Activated CD4-positive, alpha-beta memory T cell treated with anti-CD3 and anti-CD28 coated beads for 36 hours (primary cell): ENCODE measurements at regions of chr9 and their contacts with region 1.

Region 1: DNA sequence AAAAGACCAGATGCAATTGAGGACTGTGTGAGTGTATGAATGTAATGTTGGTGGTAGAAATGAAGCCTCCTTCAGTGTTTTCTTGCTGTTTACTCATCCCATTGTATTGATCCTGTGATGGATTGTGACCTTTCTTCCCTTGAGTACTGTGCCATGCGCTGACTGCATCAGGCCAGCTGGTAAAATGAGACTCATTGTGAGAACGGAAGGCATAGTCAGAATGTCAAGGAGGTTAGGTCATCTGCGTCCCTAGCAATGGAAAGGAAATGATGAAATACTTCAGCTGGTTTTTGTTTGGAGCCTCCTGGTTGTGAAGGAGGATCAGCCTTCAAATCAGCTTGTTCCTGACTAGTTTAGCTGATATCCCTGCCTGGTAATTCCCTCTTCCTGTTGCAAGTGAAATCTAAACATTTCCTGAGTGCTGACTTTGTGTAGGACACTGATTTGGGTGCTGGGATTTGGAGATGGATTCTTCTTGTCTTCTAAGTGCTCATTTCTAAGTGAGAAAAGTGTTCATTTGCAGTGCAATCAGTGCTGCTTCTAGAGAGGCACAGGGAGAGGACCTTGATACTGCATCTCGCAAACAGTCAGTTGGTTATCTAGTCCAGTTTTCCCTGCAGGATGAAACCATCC is 35.5 kb downstream of the TNFSF8 start:
- DNase-seq: peak; percentile 76
- H3K4me3 Mint-ChIP-seq: no peak overlapping the region
- H3K27ac Mint-ChIP-seq: peak overlapping the region; percentile 77
- H3K4me1 Mint-ChIP-seq: peaks cover 52% of the 10 kb centered on the region
- H3K27me3 Mint-ChIP-seq: no peaks in the 10 kb centered on the region

Region 2: GRCh38 chr9:114487607-114488300 is 407.2 kb before region 1 on chr9:
- CTCF ChIA-PET with region 1: no interaction called
- POLR2A ChIA-PET with region 1: no interaction called
- intact Hi-C with region 1: loop called (anchors 10 kb)
- DNase-seq: peak; percentile 69
- H3K4me3 Mint-ChIP-seq: no peak overlapping the region
- H3K27ac Mint-ChIP-seq: no peak overlapping the region
- H3K4me1 Mint-ChIP-seq: peaks cover 26% of the 10 kb centered on the region
- H3K27me3 Mint-ChIP-seq: peaks cover 1% of the 10 kb centered on the region

Region 3: GRCh38 chr9:114518599-114519022 is 376.3 kb before region 1 on chr9:
- CTCF ChIA-PET with region 1: no interaction called
- POLR2A ChIA-PET with region 1: no interaction called
- intact Hi-C with region 1: no loop called
- DNase-seq: no peak
- H3K4me3 Mint-ChIP-seq: no peak overlapping the region
- H3K27ac Mint-ChIP-seq: no peak overlapping the region
- H3K4me1 Mint-ChIP-seq: no peaks in the 10 kb centered on the region
- H3K27me3 Mint-ChIP-seq: peaks cover 17% of the 10 kb centered on the region

Region 4: DNA sequence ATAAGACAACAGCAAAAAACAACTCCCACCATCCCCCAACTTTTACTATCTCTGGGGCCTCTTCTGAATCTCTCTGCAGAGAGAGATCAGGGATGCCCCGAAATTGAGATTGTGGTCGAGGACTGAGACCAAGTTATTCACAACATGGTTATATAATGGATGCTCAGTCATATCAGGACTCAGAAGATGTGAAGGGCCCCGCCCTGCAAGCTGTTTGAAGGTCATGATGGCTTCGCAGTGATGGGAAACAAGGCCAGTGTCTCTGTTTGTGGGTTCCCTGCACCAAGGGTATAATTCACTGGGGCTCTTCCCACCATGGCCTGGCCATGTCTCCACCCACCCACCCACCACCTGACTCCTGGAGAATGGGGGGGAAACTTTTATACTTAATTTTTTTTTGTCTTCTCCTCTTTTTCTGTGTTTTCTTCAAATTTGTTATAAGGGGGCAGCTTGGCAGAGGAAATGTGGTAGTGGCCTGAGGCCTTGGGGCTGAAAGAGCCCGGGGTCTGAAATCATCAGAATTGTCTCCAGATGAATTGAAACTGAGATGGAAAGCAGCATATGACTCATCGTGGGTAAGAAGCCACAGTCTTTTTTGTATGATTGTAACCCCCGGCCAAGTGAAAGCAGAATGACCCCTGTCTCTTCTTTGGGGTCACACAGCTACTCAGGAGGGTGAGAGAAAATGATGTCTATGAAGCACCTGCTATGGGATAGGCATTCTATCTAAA is 197.9 kb before region 1 on chr9:
- CTCF ChIA-PET with region 1: interaction called, 4 read pairs
- POLR2A ChIA-PET with region 1: interaction called, 11 read pairs
- intact Hi-C with region 1: loop called (anchors 1 kb)
- DNase-seq: peak; percentile 88
- H3K4me3 Mint-ChIP-seq: peak overlapping the region; percentile 42
- H3K27ac Mint-ChIP-seq: peak overlapping the region; percentile 99
- H3K4me1 Mint-ChIP-seq: peaks cover 87% of the 10 kb centered on the region
- H3K27me3 Mint-ChIP-seq: peaks cover 2% of the 10 kb centered on the region

Region 5: DNA sequence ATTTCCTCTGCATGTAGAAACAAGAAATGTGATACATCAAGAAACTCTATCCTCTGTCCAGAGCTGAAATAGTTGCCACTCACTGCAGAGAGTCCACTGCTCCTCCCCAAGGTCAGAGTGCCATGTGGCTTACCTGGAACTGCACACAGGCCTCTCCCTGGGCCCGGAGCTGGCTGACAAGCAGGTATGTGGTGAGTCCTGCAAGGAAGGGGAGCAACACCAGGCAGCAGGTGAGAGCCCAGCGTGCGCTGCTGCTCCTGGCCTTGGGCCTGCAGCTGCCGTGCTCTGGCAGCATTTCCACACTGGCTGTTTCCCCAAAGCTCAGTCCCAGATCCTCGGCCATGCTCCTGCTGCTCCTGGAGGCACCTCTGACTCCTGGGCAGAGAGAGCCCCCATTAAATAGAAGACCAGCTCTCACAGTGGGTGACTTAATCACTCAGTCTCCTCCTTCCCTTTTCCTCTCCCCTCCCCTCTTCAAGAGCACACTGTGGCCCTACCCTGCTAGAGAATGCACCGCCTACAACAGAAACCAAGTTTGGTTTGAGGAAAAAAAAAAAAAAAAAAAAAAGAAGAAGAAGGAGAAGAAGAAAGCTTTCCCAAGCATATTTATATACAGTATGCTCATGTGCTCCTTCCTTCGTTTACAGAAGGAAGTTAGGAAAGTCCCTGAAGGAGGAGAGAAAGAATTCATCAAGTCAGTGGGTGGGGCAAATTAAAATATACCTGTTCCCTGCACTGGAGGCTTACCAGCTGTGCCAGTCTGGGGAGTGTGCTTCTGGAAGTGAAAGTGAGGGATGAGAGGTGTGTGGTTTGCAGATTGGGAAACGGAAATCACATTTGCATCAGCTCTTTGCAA is 89.0 kb before region 1 on chr9 and contains the start of gene TNFSF15:
- CTCF ChIA-PET with region 1: interaction called, 3 read pairs
- POLR2A ChIA-PET with region 1: interaction called, 4 read pairs
- intact Hi-C with region 1: loop called (anchors 1 kb)
- DNase-seq: peak; percentile 67
- H3K4me3 Mint-ChIP-seq: peak within 1 kb of the TSS; percentile 30
- H3K27ac Mint-ChIP-seq: no peak within 1 kb of the TSS
- H3K4me1 Mint-ChIP-seq: peaks cover 24% of the 10 kb centered on the region
- H3K27me3 Mint-ChIP-seq: no peaks in the 10 kb centered on the region
- total RNA-seq, gene TNFSF15: 0.12 to 0.14 TPM

Region 6: DNA sequence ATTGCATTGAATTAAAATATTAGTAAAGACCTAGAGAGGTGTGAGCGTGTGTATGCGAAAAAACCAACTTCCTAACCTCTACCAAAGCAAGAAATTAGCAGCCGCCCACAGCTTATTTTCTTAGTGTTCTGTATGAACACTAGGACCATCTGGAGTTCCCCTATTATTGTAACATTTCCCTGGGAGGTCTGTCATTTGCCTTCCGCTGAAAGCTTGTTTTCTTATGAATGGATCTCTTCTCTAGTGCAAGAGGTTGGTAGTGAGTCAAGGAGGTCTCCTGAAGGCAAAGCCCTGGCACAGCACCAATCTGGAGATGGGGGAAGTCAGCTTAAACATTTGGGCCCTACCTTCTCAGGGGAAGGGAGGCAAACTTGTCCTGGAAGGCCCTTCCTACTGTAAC is 24.7 kb after region 1 on chr9:
- CTCF ChIA-PET with region 1: interaction called, 3 read pairs
- POLR2A ChIA-PET with region 1: interaction called, 3 read pairs
- intact Hi-C with region 1: loop called (anchors 2 kb)
- DNase-seq: peak; percentile 68
- H3K4me3 Mint-ChIP-seq: peak overlapping the region; percentile 10
- H3K27ac Mint-ChIP-seq: peak overlapping the region; percentile 76
- H3K4me1 Mint-ChIP-seq: peaks cover 93% of the 10 kb centered on the region
- H3K27me3 Mint-ChIP-seq: no peaks in the 10 kb centered on the region

Region 7: DNA sequence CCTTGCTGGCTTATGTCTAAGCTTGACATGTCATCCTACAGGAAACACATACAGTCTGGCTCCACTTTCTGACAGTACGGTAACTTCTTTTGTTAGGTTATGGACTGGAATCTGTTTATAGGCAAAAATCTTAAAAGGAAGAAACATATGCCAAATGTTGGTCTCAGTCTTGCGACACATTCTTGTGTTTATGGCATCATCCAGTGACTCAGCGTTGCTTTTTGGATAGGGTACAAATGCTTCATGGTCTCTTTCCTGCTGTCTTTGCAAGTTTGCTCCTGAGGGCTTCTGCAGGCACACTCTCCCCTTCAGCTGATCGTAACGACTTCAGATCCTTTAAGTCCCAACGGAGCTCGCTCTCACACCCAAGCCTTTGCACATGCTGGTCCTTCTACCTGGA is 59.0 kb after region 1 on chr9:
- CTCF ChIA-PET with region 1: no interaction called
- POLR2A ChIA-PET with region 1: no interaction called
- intact Hi-C with region 1: loop called (anchors 2 kb)
- DNase-seq: peak; percentile 48
- H3K4me3 Mint-ChIP-seq: no peak overlapping the region
- H3K27ac Mint-ChIP-seq: no peak overlapping the region
- H3K4me1 Mint-ChIP-seq: peaks cover 35% of the 10 kb centered on the region
- H3K27me3 Mint-ChIP-seq: no peaks in the 10 kb centered on the region